ENCODE measurements at regions of chr4 and their contacts with region 1.

Region 1: GRCh38 chr4:92172203-92172602 is 131.6 kb upstream of the GRID2 start:
- DNase-seq: no peak
- H3K4me3 Mint-ChIP-seq: no peak overlapping the region
- H3K27ac Mint-ChIP-seq: no peak overlapping the region
- H3K4me1 Mint-ChIP-seq: no peaks in the 10 kb centered on the region
- H3K27me3 Mint-ChIP-seq: no peaks in the 10 kb centered on the region
- CTCF ChIP-seq: no peak

Region 2: GRCh38 chr4:92299152-92299551 is 126.9 kb after region 1 on chr4:
- CTCF ChIA-PET with region 1: no interaction called
- intact Hi-C with region 1: loop called (anchors 5 kb)
- DNase-seq: no peak
- H3K4me3 Mint-ChIP-seq: no peak overlapping the region
- H3K27ac Mint-ChIP-seq: no peak overlapping the region
- H3K4me1 Mint-ChIP-seq: no peaks in the 10 kb centered on the region
- H3K27me3 Mint-ChIP-seq: peaks cover 8% of the 10 kb centered on the region
- CTCF ChIP-seq: no peak

Region 3: GRCh38 chr4:92387459-92388069 is 215.4 kb after region 1 on chr4:
- CTCF ChIA-PET with region 1: no interaction called
- intact Hi-C with region 1: loop called (anchors 2 kb)
- DNase-seq: peak; percentile 2
- H3K4me3 Mint-ChIP-seq: no peak overlapping the region
- H3K27ac Mint-ChIP-seq: no peak overlapping the region
- H3K4me1 Mint-ChIP-seq: no peaks in the 10 kb centered on the region
- H3K27me3 Mint-ChIP-seq: no peaks in the 10 kb centered on the region
- CTCF ChIP-seq: peak; percentile 28